ENCODE measurements at regions of chr17 and their contacts with region 1.

Region 1: DNA sequence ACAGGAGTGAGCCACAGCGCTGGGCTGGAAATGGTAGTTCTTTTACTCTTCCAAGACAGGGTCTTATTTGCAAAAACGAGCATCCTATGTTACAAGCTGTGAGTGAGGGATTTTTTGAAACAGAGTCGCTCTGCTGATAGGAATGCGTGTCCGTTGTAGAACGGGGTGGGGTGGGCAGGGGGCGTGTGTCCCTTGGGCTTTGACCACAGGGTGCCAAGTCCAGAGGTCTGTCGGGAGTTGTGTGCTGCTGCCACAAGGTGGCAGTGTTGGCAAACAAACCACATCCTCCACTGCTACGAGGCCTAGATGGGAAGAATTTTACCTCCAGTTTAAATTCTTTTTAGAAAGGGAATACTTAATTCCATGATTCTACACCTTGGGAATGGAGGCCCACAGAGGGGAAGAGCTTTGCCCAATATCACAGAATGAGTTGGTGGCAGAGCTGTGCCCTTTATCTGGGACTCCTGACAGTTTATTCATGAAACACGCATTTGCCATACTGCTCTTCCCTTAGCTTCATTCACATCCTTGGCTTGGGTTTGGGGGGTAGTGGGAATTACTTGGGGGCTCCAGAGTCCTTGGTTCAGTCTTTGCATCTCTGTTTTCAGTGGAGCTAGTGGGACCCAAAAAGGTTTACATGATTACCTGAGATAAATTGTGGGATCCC is 30.6 kb upstream of the ETV4 start:
- DNase-seq: peak; percentile 83
- H3K4me3 ChIP-seq: no peak overlapping the region; a peak in 1 of 4 replicates
- H3K27ac ChIP-seq: no peak overlapping the region
- H3K4me1 ChIP-seq: peaks cover 10% of the 10 kb centered on the region in 2 experiments; a peak in 2 of 4 replicates
- H3K27me3 ChIP-seq: no peaks in the 10 kb centered on the region
- CTCF ChIP-seq: peak; percentile 90
- EP300 ChIP-seq: no peak
- RAD21 ChIP-seq: peak; percentile 97

Region 2: GRCh38 chr17:43475494-43476089 is 101.1 kb before region 1 on chr17:
- CTCF ChIA-PET with region 1: no interaction called
- POLR2A ChIA-PET with region 1: no interaction called
- DNase-seq: no peak
- H3K4me3 ChIP-seq: no peak overlapping the region
- H3K27ac ChIP-seq: no peak overlapping the region
- H3K4me1 ChIP-seq: no peaks in the 10 kb centered on the region; a peak in 1 of 4 replicates
- H3K27me3 ChIP-seq: no peaks in the 10 kb centered on the region
- CTCF ChIP-seq: no peak
- EP300 ChIP-seq: no peak
- RAD21 ChIP-seq: no peak

Region 3: GRCh38 chr17:43524945-43525575 is 51.6 kb before region 1 on chr17:
- CTCF ChIA-PET with region 1: interaction called, 13 read pairs
- POLR2A ChIA-PET with region 1: no interaction called
- DNase-seq: no peak
- H3K4me3 ChIP-seq: no peak overlapping the region
- H3K27ac ChIP-seq: peak overlapping the region in 1 of 2 experiments; percentile 43; a peak in 1 of 4 replicates
- H3K4me1 ChIP-seq: peaks cover 14 to 18% of the 10 kb centered on the region in 2 experiments; a peak in 2 of 4 replicates
- H3K27me3 ChIP-seq: no peaks in the 10 kb centered on the region
- CTCF ChIP-seq: no peak
- EP300 ChIP-seq: no peak
- RAD21 ChIP-seq: no peak

Region 4: DNA sequence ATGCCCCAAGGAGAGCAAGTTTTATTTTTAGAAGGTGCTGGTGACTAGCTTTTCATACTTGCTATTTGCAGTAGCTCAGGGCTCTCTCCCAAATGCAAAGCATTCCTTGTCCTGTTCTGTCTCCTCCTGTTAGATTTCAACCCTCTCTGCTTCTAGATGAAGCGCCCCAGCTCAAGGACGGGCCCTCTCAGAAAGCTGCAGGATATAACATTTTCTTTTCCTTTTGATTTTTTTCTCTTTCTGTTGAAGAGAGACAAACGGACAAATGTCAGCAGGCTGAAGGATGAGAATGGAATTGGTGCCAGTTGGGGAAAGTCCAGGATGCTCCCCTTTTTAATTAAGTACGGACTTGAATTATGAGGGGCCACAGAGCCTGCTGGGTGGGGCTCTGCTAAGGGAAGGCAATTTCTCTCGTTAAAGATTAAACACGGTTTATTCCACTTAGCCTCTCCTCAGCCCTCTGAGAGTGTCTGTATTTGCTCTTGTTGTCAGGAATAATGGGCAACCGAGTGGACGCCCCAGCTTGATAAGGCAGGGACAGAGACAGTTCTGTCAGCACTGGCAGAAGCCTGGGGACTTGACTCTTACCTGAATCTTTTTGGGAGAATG is 24.4 kb before region 1 on chr17:
- CTCF ChIA-PET with region 1: interaction called, 21 read pairs
- POLR2A ChIA-PET with region 1: no interaction called
- DNase-seq: no peak
- H3K4me3 ChIP-seq: no peak overlapping the region
- H3K27ac ChIP-seq: no peak overlapping the region
- H3K4me1 ChIP-seq: no peaks in the 10 kb centered on the region
- H3K27me3 ChIP-seq: no peaks in the 10 kb centered on the region
- CTCF ChIP-seq: no peak
- EP300 ChIP-seq: no peak
- RAD21 ChIP-seq: no peak

Region 5: GRCh38 chr17:43599835-43600234 is 23.1 kb after region 1 on chr17:
- CTCF ChIA-PET with region 1: interaction called, 13 read pairs
- POLR2A ChIA-PET with region 1: no interaction called
- DNase-seq: no peak
- H3K4me3 ChIP-seq: no peak overlapping the region
- H3K27ac ChIP-seq: no peak overlapping the region
- H3K4me1 ChIP-seq: peaks cover 2 to 7% of the 10 kb centered on the region in 2 experiments; a peak in 2 of 4 replicates
- H3K27me3 ChIP-seq: no peaks in the 10 kb centered on the region
- CTCF ChIP-seq: no peak
- EP300 ChIP-seq: no peak
- RAD21 ChIP-seq: no peak

Region 6: GRCh38 chr17:43645765-43646481 is 69.2 kb after region 1 on chr17:
- CTCF ChIA-PET with region 1: interaction called, 28 read pairs
- POLR2A ChIA-PET with region 1: no interaction called
- DNase-seq: peak; percentile 84
- H3K4me3 ChIP-seq: peak overlapping the region in 1 of 2 experiments; percentile 21; a peak in 1 of 4 replicates
- H3K27ac ChIP-seq: no peak overlapping the region
- H3K4me1 ChIP-seq: peaks cover 0 to 2% of the 10 kb centered on the region in 2 experiments; a peak in 1 of 4 replicates
- H3K27me3 ChIP-seq: no peaks in the 10 kb centered on the region
- CTCF ChIP-seq: peak; percentile 7; the same call in 1 of the 2 replicates
- EP300 ChIP-seq: no peak
- RAD21 ChIP-seq: no peak

Region 7: GRCh38 chr17:43760254-43760852 is 183.7 kb after region 1 on chr17:
- CTCF ChIA-PET with region 1: interaction called, 97 read pairs
- POLR2A ChIA-PET with region 1: interaction called, 3 read pairs
- DNase-seq: peak; percentile 94
- H3K4me3 ChIP-seq: peak overlapping the region in 1 of 2 experiments; percentile 45; a peak in 1 of 4 replicates
- H3K27ac ChIP-seq: no peak overlapping the region
- H3K4me1 ChIP-seq: peaks cover 0 to 6% of the 10 kb centered on the region in 2 experiments; a peak in 1 of 4 replicates
- H3K27me3 ChIP-seq: no peaks in the 10 kb centered on the region
- CTCF ChIP-seq: peak; percentile 99
- EP300 ChIP-seq: no peak
- RAD21 ChIP-seq: peak; percentile 100